ENCODE measurements at regions of chr10 and their contacts with region 1.

Region 1: DNA sequence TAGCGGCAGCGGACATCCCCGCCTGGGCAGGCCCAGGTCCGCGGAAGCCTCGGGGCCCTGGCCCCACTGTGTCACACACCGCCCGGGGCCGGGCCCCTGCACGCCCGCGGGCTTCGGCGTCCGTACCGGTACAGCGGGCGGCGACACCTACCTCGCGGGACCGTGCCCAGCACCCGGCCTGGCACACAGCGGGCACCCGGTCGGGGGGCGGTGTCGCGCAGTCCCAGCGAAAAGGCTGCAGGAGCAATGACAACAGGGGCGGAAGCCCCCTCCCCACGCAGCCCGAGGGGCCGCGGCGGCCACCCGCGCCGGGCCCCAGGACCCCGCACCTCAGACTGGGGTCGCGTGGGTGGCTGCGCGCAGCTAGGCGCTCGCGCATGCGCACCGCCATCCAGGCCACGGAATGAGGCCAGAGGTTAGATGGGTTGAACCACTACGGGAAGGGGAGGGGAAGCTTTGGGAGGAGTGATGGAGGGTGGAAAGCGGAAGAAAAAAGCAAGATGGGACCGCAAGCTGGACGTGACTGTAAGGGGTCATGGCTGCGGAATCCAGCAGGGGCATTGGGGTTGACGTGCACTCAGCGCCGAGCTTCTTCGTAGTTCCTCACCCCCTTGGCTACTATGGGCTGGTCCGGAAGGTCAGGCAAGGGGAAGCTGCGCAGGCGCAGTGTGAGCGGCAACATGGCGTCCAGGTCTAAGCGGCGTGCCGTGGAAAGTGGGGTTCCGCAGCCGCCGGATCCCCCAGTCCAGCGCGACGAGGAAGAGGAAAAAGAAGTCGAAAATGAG is at the starts of genes BCCIP and UROS:
- DNase-seq: peak; percentile 83 to 99 (median 91)
- ATAC-seq: peak; percentile 85 to 86
- H3K4me3 Mint-ChIP-seq: peak within 1 kb of the TSS in 8 of 10 donors; percentile 73 to 89 (median 84)
- H3K27ac Mint-ChIP-seq: peak within 1 kb of the TSS in 8 of 10 donors; percentile 69 to 91 (median 86)
- H3K4me1 Mint-ChIP-seq: peaks cover 5 to 23% (median 15%) of the 10 kb centered on the region in 4 donors
- H3K27me3 Mint-ChIP-seq: no peaks in the 10 kb centered on the region
- polyA plus RNA-seq, gene BCCIP: 87.8 to 94.0 (median 93.6) TPM
- polyA plus RNA-seq, gene UROS: 62.2 to 71.8 (median 66.5) TPM

Region 2: GRCh38 chr10:125719146-125720001 is 103.7 kb before region 1 on chr10 and contains the start of gene EDRF1:
- POLR2A ChIA-PET with region 1: interaction called, 39 read pairs
- DNase-seq: peak; percentile 95 to 100 (median 99)
- ATAC-seq: peak; percentile 91 to 92
- H3K4me3 Mint-ChIP-seq: peak within 1 kb of the TSS; percentile 96 to 100 (median 98)
- H3K27ac Mint-ChIP-seq: peak within 1 kb of the TSS; percentile 97 to 100 (median 99)
- H3K4me1 Mint-ChIP-seq: peaks cover 11 to 40% (median 30%) of the 10 kb centered on the region in 4 donors
- H3K27me3 Mint-ChIP-seq: no peaks in the 10 kb centered on the region
- polyA plus RNA-seq, gene EDRF1: 10.3 to 12.8 (median 11.6) TPM

Region 3: GRCh38 chr10:125768219-125768855 is 54.7 kb before region 1 on chr10:
- POLR2A ChIA-PET with region 1: no interaction called
- DNase-seq: no peak
- ATAC-seq: no peak
- H3K4me3 Mint-ChIP-seq: no peak overlapping the region
- H3K27ac Mint-ChIP-seq: peak overlapping the region in 3 of 10 donors; percentile 12 to 50 (median 15)
- H3K4me1 Mint-ChIP-seq: no peaks in the 10 kb centered on the region
- H3K27me3 Mint-ChIP-seq: no peaks in the 10 kb centered on the region

Region 4: DNA sequence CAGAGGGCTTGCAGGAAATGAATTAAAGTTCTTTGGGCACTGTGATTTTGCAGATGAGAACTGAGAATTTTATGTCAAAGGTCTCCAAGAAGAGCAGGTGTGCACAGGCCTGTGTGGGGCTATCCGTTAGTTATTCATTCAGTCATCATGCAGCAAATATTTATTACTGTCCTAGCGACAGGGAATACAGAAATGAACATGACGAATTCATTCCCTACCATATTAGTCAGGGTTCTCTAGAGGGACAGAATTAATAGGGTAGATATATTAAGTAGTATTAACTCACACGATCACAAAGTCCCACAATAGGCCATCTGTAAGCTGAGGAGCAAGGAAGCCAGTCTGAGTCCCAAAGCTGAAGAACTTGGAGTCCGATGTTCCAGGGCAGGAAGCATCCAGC is 44.5 kb before region 1 on chr10:
- POLR2A ChIA-PET with region 1: no interaction called
- DNase-seq: no peak
- ATAC-seq: no peak
- H3K4me3 Mint-ChIP-seq: no peak overlapping the region
- H3K27ac Mint-ChIP-seq: peak overlapping the region in 1 of 10 donors; percentile 62
- H3K4me1 Mint-ChIP-seq: peaks cover 0 to 6% (median 0%) of the 10 kb centered on the region in 4 donors
- H3K27me3 Mint-ChIP-seq: peaks cover 0 to 22% (median 11%) of the 10 kb centered on the region in 5 donors